ENCODE measurements at regions of chr2 and their contacts with region 1.

Region 1: GRCh38 chr2:147843864-147844696 is 749 bp upstream of the ACVR2A start:
- DNase-seq: peak; percentile 85
- ATAC-seq: peak; percentile 93
- H3K4me3 ChIP-seq: peak overlapping the region; percentile 96
- H3K27ac ChIP-seq: peak overlapping the region; percentile 93
- H3K4me1 ChIP-seq: peaks cover 3% of the 10 kb centered on the region; the same call in 1 of the 2 replicates
- H3K27me3 ChIP-seq: no peaks in the 10 kb centered on the region
- CTCF ChIP-seq: peak; percentile 22; the same call in 1 of the 2 replicates
- POLR2A ChIP-seq: peak; percentile 78
- RAD21 ChIP-seq: no peak

Region 2: DNA sequence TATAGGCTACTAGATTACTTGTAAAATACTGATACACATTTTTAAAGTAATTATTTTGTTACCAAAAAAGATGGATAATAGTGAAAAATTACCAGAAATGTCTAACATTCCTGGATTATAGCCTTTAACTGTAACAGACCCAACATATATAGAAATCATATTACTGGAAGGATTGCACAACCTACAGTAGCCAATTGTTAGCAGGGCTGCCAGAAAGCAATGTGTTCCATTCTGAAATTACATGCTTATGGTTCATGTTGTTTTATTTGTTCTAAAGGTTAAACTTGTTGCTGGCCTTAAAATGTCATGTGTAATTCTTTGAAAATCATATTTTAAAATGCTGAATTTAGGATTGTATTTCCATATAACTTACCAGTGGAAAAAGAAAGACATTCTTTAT is 792.8 kb before region 1 on chr2:
- CTCF ChIA-PET with region 1: no interaction called
- POLR2A ChIA-PET with region 1: no interaction called
- dilution Hi-C with region 1: no loop called
- in situ Hi-C with region 1: no loop called
- intact Hi-C with region 1: loop called (anchors 5 kb)
- DNase-seq: no peak
- ATAC-seq: no peak
- H3K4me3 ChIP-seq: no peak overlapping the region
- H3K27ac ChIP-seq: no peak overlapping the region
- H3K4me1 ChIP-seq: no peaks in the 10 kb centered on the region; the same call in 1 of the 2 replicates
- H3K27me3 ChIP-seq: no peaks in the 10 kb centered on the region
- CTCF ChIP-seq: no peak
- POLR2A ChIP-seq: no peak
- RAD21 ChIP-seq: no peak

Region 3: GRCh38 chr2:147663153-147663961 is 180.7 kb before region 1 on chr2:
- CTCF ChIA-PET with region 1: no interaction called
- POLR2A ChIA-PET with region 1: no interaction called
- dilution Hi-C with region 1: no loop called
- in situ Hi-C with region 1: no loop called
- intact Hi-C with region 1: loop called (anchors 5 kb)
- DNase-seq: no peak
- ATAC-seq: no peak
- H3K4me3 ChIP-seq: no peak overlapping the region
- H3K27ac ChIP-seq: no peak overlapping the region
- H3K4me1 ChIP-seq: peaks cover 6% of the 10 kb centered on the region; the same call in 1 of the 2 replicates
- H3K27me3 ChIP-seq: no peaks in the 10 kb centered on the region
- CTCF ChIP-seq: no peak
- POLR2A ChIP-seq: no peak
- RAD21 ChIP-seq: no peak